ENCODE measurements at regions of chr14 and their contacts with region 1.

Region 1: DNA sequence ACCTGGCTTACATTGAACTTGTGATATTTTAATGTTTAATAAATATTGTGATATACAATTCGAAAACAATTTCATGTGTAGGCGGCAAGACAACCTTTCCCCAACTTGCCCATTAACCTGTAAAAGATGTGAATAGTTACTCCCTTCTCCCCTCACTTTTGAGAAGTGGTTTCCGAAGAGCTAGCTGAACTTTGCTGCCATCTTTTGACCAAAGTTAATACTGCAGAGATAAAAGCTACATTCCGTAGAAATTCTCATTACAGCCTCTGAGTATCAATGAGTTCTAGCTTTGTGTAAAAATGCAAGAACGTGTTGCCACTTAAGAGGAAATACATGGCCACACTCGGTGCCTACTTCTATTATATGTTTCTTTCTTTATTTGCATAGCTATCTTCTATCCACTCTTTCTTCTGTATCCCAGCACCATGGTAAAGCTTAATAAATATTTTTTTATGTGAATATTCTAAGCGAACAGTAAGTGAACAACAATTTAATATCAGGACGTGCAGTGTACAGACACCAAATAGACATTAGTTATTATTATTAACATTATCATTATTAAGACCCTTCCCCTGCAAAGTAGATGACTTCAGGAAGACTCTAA is 105.1 kb upstream of the TMEM260 start:
- DNase-seq: peak; percentile 23
- ATAC-seq: peak; percentile 76
- H3K4me3 ChIP-seq: no peak overlapping the region
- H3K27ac ChIP-seq: no peak overlapping the region
- H3K4me1 ChIP-seq: no peaks in the 10 kb centered on the region
- H3K27me3 ChIP-seq: 0 out of 2 replicates have a peak, but pooled peaks cover 7% of the 10 kb centered on the region
- CTCF ChIP-seq: peak; percentile 58 to 72 (median 71); a peak in 5 of 6 replicates
- POLR2A ChIP-seq: no peak
- RAD21 ChIP-seq: peak; percentile 83

Region 2: GRCh38 chr14:55438066-55438683 is 1036.3 kb before region 1 on chr14:
- CTCF ChIA-PET with region 1: interaction called, 29 read pairs
- POLR2A ChIA-PET with region 1: no interaction called
- RAD21 ChIA-PET with region 1: interaction called in 1 of 2 experiments, 3 read pairs
- intact Hi-C with region 1: loop called (anchors 2 kb)
- DNase-seq: peak; percentile 57
- ATAC-seq: peak; percentile 94
- H3K4me3 ChIP-seq: no peak overlapping the region
- H3K27ac ChIP-seq: no peak overlapping the region
- H3K4me1 ChIP-seq: peaks cover 0 to 7% of the 10 kb centered on the region in 2 experiments; a peak in 3 of 4 replicates
- H3K27me3 ChIP-seq: no peaks in the 10 kb centered on the region
- CTCF ChIP-seq: peak; percentile 68 to 77 (median 68); a peak in 5 of 6 replicates
- POLR2A ChIP-seq: no peak
- RAD21 ChIP-seq: peak; percentile 87

Region 3: DNA sequence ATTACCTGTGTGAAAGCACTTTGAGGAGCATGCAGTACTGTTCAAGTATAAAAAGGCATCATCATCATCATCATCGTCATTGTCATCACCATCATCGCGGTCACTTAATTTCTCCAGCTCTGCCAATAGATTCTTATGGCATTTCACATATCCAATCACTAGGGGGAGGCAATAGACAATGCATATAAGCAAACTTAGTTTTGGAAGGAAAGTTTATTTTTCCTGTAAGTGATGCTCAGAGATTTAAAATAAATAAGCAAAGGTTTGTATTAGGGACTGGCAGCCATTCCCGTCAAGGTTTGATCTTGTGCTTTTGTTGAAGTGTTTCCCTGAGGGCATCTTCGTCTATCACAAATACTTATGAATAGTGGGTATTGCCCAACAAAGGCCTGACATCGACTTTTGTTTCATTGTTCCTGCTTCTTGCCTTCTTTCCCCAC is 767.1 kb before region 1 on chr14:
- CTCF ChIA-PET with region 1: interaction called, 10 read pairs
- POLR2A ChIA-PET with region 1: no interaction called
- RAD21 ChIA-PET with region 1: interaction called in 1 of 2 experiments, 3 read pairs
- intact Hi-C with region 1: loop called (anchors 5 kb)
- DNase-seq: no peak
- ATAC-seq: peak; percentile 67
- H3K4me3 ChIP-seq: no peak overlapping the region
- H3K27ac ChIP-seq: no peak overlapping the region
- H3K4me1 ChIP-seq: no peaks in the 10 kb centered on the region
- H3K27me3 ChIP-seq: no peaks in the 10 kb centered on the region
- CTCF ChIP-seq: peak; percentile 50 to 74 (median 53); a peak in 5 of 6 replicates
- POLR2A ChIP-seq: no peak
- RAD21 ChIP-seq: peak; percentile 83

Region 4: DNA sequence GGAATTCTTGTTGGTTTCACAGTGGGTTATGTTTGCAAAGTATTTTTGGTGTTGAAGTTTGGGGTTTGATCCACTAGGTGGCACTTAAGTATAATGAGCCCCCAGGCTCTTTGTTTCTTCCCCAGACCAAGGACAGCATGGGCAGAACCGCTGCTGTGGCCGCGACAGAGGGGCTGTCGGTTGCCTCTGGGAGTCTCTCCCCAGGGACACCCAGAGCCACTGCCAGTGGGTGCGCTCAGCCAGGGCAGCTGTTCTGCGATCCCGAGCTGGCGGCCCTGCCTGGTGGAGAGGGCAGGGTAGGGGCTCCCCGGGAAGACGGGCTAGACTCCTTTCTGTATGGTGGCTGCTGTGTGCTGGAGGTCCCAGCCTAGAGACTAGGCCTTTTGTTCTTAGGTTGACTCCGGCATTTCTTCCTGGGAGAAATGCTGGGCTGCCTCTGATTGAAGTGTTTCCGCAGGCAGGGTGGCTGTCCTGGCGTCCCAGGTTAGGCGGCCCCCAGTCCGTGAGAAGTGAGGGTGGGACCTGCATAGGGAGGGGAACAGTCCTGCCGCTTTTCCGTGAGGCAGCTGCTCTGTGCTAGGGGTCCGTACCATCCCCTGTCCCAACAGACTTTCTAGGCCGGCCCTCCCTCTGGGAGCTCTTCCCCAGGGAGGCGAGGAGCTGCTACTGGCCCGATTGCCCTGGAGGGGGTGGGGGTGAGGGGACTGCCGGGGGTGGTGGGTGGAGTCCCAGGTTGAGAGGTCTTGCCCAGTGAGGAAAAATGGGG is 609.4 kb before region 1 on chr14:
- CTCF ChIA-PET with region 1: interaction called, 7 read pairs
- POLR2A ChIA-PET with region 1: no interaction called
- RAD21 ChIA-PET with region 1: no interaction called
- intact Hi-C with region 1: loop called (anchors 2 kb)
- DNase-seq: no peak
- ATAC-seq: peak; percentile 76
- H3K4me3 ChIP-seq: no peak overlapping the region
- H3K27ac ChIP-seq: no peak overlapping the region
- H3K4me1 ChIP-seq: no peaks in the 10 kb centered on the region
- H3K27me3 ChIP-seq: no peaks in the 10 kb centered on the region
- CTCF ChIP-seq: peak; percentile 39 to 56 (median 56); a peak in 4 of 6 replicates
- POLR2A ChIP-seq: no peak
- RAD21 ChIP-seq: peak; percentile 72

Region 5: GRCh38 chr14:56461276-56462275 is 12.9 kb before region 1 on chr14:
- CTCF ChIA-PET with region 1: interaction called, 12 read pairs
- POLR2A ChIA-PET with region 1: no interaction called
- RAD21 ChIA-PET with region 1: no interaction called
- intact Hi-C with region 1: no loop called
- DNase-seq: no peak
- ATAC-seq: no peak
- H3K4me3 ChIP-seq: no peak overlapping the region
- H3K27ac ChIP-seq: no peak overlapping the region
- H3K4me1 ChIP-seq: no peaks in the 10 kb centered on the region
- H3K27me3 ChIP-seq: no peaks in the 10 kb centered on the region
- CTCF ChIP-seq: no peak
- POLR2A ChIP-seq: no peak
- RAD21 ChIP-seq: no peak